ENCODE measurements at regions of chr11 and their contacts with region 1.

Region 1: DNA sequence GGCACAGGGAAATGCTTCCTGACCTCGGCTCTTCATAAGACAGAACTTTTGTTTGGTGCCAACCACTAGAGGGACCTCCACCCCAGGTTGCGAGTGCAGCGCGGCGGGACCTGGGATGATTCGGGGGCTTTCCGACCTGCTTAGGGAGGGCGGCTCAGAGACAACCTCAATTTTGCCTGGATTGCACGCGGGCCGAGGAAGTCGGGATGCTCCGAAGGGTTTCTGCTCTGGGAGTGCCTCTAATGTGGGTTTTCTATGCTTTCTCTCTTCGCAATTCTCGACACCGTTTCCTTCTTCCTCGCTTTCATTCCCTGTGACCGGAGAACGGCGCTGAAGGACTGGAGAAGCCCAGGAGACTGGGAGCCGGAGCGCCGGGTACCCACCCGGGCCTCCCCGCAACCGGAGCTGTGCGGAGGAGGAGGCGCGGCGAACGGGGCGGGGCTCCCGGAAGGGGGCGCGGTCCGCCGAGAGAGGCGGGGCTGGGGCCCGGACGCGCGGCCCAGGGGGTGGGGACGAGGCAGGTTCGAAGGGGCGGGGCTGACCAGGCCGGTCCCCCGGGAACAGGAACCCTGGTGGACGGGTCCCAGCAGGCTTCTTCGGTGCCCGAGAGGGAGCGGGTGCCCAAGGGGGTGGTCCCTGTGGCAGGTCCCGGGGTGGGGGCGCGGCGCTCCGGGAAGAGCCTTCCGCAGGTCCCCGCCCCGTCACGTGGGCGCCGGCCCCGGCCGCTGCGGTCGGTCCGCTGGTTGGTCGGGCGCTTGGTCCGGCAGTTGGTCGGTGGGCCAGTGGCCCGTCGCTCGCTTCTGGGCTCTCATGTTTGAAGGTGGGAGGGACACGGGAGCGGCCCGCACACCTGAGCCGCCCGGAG is at the start of gene PPFIBP2:
- DNase-seq: peak; percentile 82
- ATAC-seq: peak; percentile 89
- H3K4me3 Mint-ChIP-seq: peak within 1 kb of the TSS; percentile 86
- H3K27ac Mint-ChIP-seq: peak within 1 kb of the TSS; percentile 90
- H3K4me1 Mint-ChIP-seq: peaks cover 25% of the 10 kb centered on the region
- H3K27me3 Mint-ChIP-seq: peaks cover 4% of the 10 kb centered on the region
- CTCF ChIP-seq: peak; percentile 93
- total RNA-seq, gene PPFIBP2: 13.3 to 14.2 TPM

Region 2: DNA sequence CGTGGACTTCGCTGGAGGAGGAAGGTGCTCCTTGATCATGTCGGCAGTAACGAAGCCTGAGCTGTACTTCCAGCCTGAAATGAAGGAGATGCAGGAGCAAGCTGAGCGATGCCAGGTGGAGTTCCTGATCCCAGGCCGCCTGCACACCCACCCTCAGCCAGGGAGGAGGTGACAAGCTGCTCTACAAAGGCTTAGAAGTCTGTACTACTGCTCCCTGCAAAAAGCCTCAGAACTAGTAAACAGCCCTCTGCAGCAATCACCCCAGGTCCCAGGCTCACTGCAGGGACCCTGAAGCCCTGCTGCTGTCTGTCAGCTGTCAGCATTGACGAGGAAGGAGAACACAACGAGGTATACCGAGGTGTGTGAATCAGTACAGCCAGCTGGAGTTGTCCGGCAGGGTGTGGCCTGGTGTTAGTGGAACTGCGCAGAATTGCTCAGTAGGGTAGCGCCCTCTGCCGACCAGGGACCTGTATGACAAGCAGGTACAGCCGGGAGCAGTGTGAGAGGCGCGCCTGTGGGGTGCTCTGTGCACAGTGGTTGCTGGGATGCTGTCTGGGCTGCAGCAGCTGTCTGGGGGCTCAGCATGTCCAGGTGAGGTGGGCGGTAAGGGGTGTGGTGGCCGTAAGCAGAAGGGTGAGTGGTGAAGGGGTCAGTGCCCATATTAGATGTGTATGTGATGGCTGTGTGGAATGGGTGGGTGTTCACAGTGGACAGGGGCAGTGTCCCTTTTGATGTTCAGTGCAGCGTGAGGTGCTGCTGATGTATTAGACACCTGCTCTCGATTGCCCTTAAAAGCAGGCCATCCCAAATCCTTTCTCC is 152.2 kb after region 1 on chr11:
- CTCF ChIA-PET with region 1: interaction called, 12 read pairs
- POLR2A ChIA-PET with region 1: no interaction called
- intact Hi-C with region 1: loop called (anchors 2 kb)
- DNase-seq: peak; percentile 78
- ATAC-seq: peak; percentile 99
- H3K4me3 Mint-ChIP-seq: no peak overlapping the region
- H3K27ac Mint-ChIP-seq: no peak overlapping the region
- H3K4me1 Mint-ChIP-seq: no peaks in the 10 kb centered on the region
- H3K27me3 Mint-ChIP-seq: peaks cover 8% of the 10 kb centered on the region
- CTCF ChIP-seq: peak; percentile 87